HCT116 (cell line): ENCODE measurements at regions of chr5 and their contacts with region 1.

Region 1: DNA sequence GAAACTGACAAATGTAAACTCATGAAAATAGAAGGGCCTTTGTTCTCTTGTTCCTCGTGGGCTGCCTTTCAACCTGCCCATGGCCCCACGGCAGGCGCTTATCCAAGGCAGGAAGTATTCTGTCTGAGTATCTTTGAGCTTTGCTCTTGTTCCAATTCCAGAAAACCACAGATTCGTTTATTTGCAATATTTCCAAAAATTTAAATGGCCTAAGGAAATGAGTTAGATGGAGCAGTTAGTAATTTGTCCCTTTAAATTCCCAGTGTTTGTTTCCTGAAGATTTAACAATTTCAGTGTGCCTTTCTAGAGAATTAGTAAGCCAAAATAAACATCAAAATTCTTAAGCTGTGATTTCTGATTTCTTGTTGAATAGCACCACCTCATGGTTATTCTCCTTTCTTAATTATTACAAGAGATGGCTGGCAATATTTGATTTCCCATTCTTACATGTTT is 299.4 kb upstream of the RASA1 start:
- DNase-seq: peak; percentile 54
- ATAC-seq: peak; percentile 36; the same call in 1 of the 2 replicates
- H3K4me3 ChIP-seq: no peak overlapping the region
- H3K27ac ChIP-seq: no peak overlapping the region
- H3K4me1 ChIP-seq: no peaks in the 10 kb centered on the region
- H3K27me3 ChIP-seq: no peaks in the 10 kb centered on the region
- CTCF ChIP-seq: peak; percentile 4 to 62 (median 59); a peak in 3 of 6 replicates
- POLR2A ChIP-seq: no peak
- RAD21 ChIP-seq: peak; percentile 77

Region 2: GRCh38 chr5:86709157-86709881 is 259.0 kb before region 1 on chr5:
- CTCF ChIA-PET with region 1: no interaction called
- POLR2A ChIA-PET with region 1: no interaction called
- RAD21 ChIA-PET with region 1: no interaction called
- intact Hi-C with region 1: loop called (anchors 10 kb)
- DNase-seq: no peak
- ATAC-seq: no peak
- H3K4me3 ChIP-seq: no peak overlapping the region
- H3K27ac ChIP-seq: no peak overlapping the region
- H3K4me1 ChIP-seq: no peaks in the 10 kb centered on the region
- H3K27me3 ChIP-seq: no peaks in the 10 kb centered on the region
- CTCF ChIP-seq: no peak
- POLR2A ChIP-seq: no peak
- RAD21 ChIP-seq: no peak

Region 3: DNA sequence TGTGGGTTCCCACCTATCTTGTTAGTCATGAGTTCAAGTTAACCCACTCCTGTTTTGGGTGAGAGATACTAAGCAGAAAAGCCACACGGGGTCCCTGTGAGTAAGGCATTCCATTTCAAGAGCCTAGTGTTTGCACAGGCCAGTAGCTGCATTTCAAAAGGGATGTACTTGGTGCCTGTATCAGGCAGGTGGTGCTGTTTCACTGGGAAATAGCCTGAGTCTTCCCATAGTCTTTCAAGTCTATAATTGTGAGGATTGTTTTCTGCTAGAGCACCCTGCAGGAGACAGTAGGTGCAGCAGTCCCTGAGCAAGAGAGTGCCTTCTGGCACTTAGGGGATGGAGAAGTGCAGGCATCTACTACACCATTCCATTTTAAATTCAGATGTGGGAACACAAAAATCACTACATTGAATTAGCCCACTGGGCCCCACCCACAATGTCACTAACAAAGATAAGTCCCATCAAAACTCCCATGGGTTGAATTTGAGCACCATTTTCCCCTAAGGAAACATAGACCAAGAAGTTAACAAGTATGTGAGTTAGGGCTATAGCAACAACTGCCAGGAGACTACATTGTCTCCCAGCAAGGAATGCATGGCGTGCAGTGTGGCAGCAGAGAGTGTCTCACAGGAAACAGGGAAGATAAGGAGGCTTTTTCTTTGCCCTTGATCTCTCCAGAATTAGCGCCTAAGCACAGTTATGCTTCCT is 87.4 kb before region 1 on chr5:
- CTCF ChIA-PET with region 1: interaction called, 56 read pairs
- POLR2A ChIA-PET with region 1: no interaction called
- RAD21 ChIA-PET with region 1: interaction called in 1 of 2 experiments, 7 read pairs
- intact Hi-C with region 1: loop called (anchors 1 kb)
- DNase-seq: peak; percentile 81
- ATAC-seq: peak; percentile 97
- H3K4me3 ChIP-seq: no peak overlapping the region
- H3K27ac ChIP-seq: no peak overlapping the region
- H3K4me1 ChIP-seq: no peaks in the 10 kb centered on the region
- H3K27me3 ChIP-seq: no peaks in the 10 kb centered on the region
- CTCF ChIP-seq: peak; percentile 89 to 97 (median 93)
- POLR2A ChIP-seq: no peak
- RAD21 ChIP-seq: peak; percentile 88

Region 4: DNA sequence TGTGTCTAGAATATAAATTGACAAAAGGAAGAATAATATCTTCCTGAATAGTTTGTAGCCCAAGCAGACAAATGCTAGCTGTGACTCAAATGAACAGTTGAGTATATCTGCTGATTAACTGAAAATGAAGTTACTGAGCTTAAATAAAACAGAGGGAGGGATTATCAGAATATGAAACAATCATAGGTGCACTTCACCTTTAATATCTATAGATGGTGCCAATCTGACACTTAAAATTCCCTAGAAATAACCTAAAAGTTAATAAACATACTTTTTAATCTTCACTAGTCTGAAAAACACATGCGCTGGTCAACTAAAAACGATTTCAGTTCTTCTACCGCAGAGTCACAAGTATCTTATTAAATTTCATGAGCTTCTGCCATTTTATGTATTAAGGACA is 18.5 kb after region 1 on chr5:
- CTCF ChIA-PET with region 1: interaction called, 11 read pairs
- POLR2A ChIA-PET with region 1: no interaction called
- RAD21 ChIA-PET with region 1: no interaction called
- intact Hi-C with region 1: no loop called
- DNase-seq: no peak
- ATAC-seq: 0 out of 2 replicates have a peak, but pooled peaks have one; percentile 36
- H3K4me3 ChIP-seq: no peak overlapping the region
- H3K27ac ChIP-seq: no peak overlapping the region
- H3K4me1 ChIP-seq: no peaks in the 10 kb centered on the region
- H3K27me3 ChIP-seq: no peaks in the 10 kb centered on the region
- CTCF ChIP-seq: peak in 1 of 3 experiments; percentile 40; a peak in 2 of 6 replicates
- POLR2A ChIP-seq: no peak
- RAD21 ChIP-seq: peak; percentile 32; the same call in 1 of the 2 replicates

Region 5: DNA sequence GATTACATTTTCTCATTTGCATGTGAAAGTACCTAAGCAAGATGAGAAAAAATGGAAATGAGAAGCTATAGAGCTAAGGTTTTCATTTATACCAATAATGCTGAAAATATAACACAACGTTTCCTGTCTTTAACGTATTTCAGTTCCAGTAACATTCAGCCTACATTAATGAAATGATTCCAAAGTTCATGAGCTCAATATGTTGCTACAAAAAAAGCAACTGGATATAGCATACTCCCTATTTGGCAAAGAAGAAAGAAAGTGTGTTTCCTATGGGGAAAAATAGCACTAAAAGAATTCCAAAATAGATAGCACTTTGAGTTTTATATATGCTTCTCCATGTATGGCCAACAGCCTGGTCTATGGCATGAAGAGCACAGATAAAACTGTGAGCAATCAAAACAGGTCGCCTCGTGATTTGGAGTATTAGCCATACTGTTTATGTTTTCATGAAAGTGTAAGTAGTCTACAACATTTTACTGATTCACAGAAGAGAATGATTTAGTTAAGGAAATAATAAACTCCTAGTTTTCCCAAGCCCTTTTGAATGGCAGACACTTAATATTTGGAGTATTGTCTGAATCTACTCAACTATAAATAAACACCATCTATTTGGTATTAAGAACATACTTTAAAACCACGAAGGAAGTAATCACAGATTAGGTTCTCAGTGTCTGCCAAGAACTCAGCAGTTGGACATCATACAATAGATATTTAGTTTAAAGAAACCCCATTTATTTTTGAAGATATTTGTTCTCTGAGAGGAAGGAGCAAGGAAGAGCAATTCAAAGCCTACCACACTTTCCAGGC is 40.6 kb after region 1 on chr5:
- CTCF ChIA-PET with region 1: interaction called, 7 read pairs
- POLR2A ChIA-PET with region 1: no interaction called
- RAD21 ChIA-PET with region 1: no interaction called
- intact Hi-C with region 1: loop called (anchors 1 kb)
- DNase-seq: no peak
- ATAC-seq: no peak
- H3K4me3 ChIP-seq: no peak overlapping the region
- H3K27ac ChIP-seq: no peak overlapping the region
- H3K4me1 ChIP-seq: no peaks in the 10 kb centered on the region
- H3K27me3 ChIP-seq: no peaks in the 10 kb centered on the region
- CTCF ChIP-seq: no peak
- POLR2A ChIP-seq: no peak
- RAD21 ChIP-seq: no peak

Region 6: DNA sequence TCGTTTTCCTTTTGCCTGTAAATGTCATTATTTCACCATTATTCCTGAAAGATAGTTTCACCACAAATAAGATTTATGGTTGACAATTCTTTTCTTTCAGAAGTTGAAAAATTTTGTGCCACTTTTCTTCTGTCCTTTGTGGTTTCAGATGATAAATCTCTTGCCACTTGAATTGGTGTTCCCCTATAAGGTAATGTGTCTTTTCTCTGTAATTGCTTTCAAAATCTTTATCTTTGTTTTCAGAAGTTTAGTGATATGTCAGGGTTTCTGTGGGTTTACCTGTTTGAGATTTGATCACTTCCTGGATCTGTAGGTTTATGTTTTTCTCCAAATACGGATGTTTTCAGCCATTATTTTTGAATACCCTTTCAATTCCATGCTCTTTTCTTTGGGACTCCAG is 313.9 kb after region 1 on chr5:
- CTCF ChIA-PET with region 1: no interaction called
- POLR2A ChIA-PET with region 1: no interaction called
- RAD21 ChIA-PET with region 1: no interaction called
- intact Hi-C with region 1: no loop called
- DNase-seq: no peak
- ATAC-seq: no peak
- H3K4me3 ChIP-seq: no peak overlapping the region
- H3K27ac ChIP-seq: no peak overlapping the region
- H3K4me1 ChIP-seq: no peaks in the 10 kb centered on the region
- H3K27me3 ChIP-seq: no peaks in the 10 kb centered on the region
- CTCF ChIP-seq: no peak
- POLR2A ChIP-seq: no peak
- RAD21 ChIP-seq: no peak